ENCODE measurements at regions of chrX and their contacts with region 1.

Region 1: DNA sequence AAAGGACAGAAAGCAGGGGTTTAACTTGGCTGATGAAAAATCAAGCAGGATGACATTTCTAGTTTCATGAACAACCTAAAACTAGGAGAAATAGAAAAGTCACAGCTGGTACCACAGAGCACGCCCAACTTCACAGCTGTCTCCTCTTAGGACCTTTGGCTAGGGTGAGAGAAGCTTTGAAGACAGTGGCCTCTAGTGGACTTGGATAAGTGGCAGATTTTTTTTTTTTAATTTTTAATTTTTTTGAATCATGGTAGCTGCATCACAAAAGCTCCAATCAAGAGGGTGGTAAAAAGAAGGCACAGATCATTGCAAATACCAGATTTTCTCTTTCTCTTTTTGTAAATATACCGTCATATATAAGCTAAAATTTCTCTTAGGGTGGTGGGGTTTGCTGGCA is 20.2 kb upstream of the MAP3K15 start:
- DNase-seq: no peak
- ATAC-seq: no peak
- H3K4me3 ChIP-seq: no peak overlapping the region
- H3K27ac ChIP-seq: no peak overlapping the region
- H3K4me1 ChIP-seq: no peaks in the 10 kb centered on the region
- H3K27me3 ChIP-seq: no peaks in the 10 kb centered on the region
- CTCF ChIP-seq: peak; percentile 53

Region 2: GRCh38 chrX:18543738-18544137 is 991.7 kb before region 1 on chrX:
- CTCF ChIA-PET with region 1: no interaction called
- POLR2A ChIA-PET with region 1: no interaction called
- in situ Hi-C with region 1: no loop called
- intact Hi-C with region 1: no loop called
- DNase-seq: no peak
- ATAC-seq: no peak
- H3K4me3 ChIP-seq: no peak overlapping the region
- H3K27ac ChIP-seq: no peak overlapping the region
- H3K4me1 ChIP-seq: no peaks in the 10 kb centered on the region
- H3K27me3 ChIP-seq: no peaks in the 10 kb centered on the region
- CTCF ChIP-seq: no peak

Region 3: DNA sequence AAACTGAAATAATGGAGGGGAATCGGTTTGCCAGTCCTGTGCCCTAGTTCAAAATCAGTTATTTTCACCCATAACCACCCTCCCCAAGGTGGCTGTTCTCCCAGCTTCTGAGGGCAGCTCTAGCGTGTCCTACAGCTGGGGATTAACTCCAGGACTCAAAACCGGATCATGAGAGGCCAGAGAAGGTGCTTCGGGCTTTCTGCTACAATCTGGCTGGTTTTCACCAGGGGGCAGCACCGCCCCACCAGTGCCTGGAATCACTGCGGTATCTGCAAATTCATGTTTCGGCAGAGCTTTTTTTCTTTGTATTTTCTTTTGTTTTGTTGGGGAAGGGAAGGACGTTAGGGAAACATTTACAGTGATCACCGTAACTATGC is 163.3 kb before region 1 on chrX:
- CTCF ChIA-PET with region 1: interaction called, 10 read pairs
- POLR2A ChIA-PET with region 1: no interaction called
- in situ Hi-C with region 1: no loop called
- intact Hi-C with region 1: no loop called
- DNase-seq: no peak
- ATAC-seq: peak; percentile 83
- H3K4me3 ChIP-seq: no peak overlapping the region
- H3K27ac ChIP-seq: no peak overlapping the region
- H3K4me1 ChIP-seq: no peaks in the 10 kb centered on the region
- H3K27me3 ChIP-seq: no peaks in the 10 kb centered on the region
- CTCF ChIP-seq: peak; percentile 81

Region 4: DNA sequence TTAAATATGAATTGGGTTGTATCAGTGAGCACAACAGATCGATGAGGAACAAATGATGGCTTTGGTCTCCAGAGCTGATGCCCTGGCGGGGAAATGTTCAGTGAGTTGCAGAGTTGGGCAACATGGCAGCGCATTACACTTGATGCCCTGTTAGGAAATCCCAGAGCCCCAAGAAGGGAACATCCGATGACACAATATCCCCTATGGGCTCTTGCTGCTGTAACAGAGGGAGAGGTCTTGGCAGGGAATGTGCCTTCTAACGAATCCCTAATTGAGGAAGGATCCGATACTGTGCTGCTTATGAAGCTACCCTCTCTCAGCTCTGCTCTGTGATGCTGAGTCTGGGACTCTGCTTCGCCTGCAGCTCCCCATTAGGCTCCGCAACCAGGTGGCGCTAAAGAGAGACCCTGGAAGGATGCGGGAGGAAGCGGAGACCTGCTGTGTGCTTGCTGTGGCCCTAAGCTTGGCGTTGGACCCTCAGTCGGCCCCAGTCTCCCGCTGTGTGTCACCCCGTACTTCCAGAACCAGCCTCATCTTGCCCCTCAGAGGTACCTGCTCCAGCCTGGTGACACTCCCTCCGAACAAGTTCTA is 152.8 kb before region 1 on chrX:
- CTCF ChIA-PET with region 1: interaction called, 15 read pairs
- POLR2A ChIA-PET with region 1: no interaction called
- in situ Hi-C with region 1: no loop called
- intact Hi-C with region 1: loop called (anchors 5 kb)
- DNase-seq: no peak
- ATAC-seq: peak; percentile 81
- H3K4me3 ChIP-seq: no peak overlapping the region
- H3K27ac ChIP-seq: no peak overlapping the region
- H3K4me1 ChIP-seq: no peaks in the 10 kb centered on the region
- H3K27me3 ChIP-seq: no peaks in the 10 kb centered on the region
- CTCF ChIP-seq: peak; percentile 76